Mammary epithelial cell (primary cell): ENCODE measurements at regions of chr17 and their contacts with region 1.

Region 1: GRCh38 chr17:51371732-51372151 is 111.4 kb downstream of the UTP18 start:
- DNase-seq: peak; percentile 47
- H3K4me3 ChIP-seq: no peak overlapping the region
- H3K27ac ChIP-seq: no peak overlapping the region
- H3K4me1 ChIP-seq: no peaks in the 10 kb centered on the region
- H3K27me3 ChIP-seq: no peaks in the 10 kb centered on the region
- CTCF ChIP-seq: peak; percentile 77 to 87

Region 2: DNA sequence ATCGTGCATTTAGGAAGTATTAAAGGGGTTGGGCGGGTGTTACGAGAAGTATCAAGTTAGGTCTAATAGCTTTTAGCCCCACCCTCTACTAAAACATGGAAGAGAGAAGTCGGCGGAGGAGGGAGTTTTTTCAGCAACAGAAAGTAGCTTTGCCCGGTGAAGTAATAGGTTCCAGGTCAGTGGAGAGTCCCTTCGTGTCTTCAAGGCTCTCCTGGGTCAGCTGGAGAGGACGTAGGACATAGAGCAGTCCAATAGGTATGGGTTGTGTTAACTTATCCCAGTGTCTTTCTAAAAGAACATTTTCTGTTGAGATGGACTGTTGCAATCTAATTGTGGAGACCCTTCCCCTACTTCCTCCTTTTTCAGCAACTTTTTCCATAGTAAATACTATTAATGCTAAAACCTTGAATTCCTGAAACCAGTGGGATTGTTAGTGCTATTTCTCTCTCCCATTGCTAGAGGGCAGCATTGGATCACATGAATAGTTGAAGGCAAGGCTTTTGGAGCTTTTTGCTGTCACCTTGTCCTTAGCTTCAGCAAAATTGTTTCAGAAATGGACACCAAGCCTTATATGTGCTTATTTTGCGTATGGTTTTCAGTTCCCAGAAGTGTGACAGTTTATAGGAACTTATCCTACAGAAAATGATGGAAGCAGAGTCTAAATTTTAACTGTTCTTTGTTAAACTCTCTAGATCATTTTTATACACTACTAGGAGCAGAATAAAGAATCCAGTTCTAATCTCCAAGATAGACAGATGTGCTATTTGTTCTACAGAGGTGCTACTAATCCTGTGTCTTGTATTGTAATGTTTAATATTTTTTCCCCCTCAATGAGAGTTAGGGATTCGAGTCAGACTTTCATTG is 73.0 kb before region 1 on chr17:
- CTCF ChIA-PET with region 1: no interaction called
- dilution Hi-C with region 1: no loop called
- in situ Hi-C with region 1: no loop called
- intact Hi-C with region 1: loop called (anchors 2 kb)
- DNase-seq: peak; percentile 16
- H3K4me3 ChIP-seq: no peak overlapping the region
- H3K27ac ChIP-seq: no peak overlapping the region
- H3K4me1 ChIP-seq: no peaks in the 10 kb centered on the region
- H3K27me3 ChIP-seq: no peaks in the 10 kb centered on the region
- CTCF ChIP-seq: peak; percentile 72 to 79

Region 3: DNA sequence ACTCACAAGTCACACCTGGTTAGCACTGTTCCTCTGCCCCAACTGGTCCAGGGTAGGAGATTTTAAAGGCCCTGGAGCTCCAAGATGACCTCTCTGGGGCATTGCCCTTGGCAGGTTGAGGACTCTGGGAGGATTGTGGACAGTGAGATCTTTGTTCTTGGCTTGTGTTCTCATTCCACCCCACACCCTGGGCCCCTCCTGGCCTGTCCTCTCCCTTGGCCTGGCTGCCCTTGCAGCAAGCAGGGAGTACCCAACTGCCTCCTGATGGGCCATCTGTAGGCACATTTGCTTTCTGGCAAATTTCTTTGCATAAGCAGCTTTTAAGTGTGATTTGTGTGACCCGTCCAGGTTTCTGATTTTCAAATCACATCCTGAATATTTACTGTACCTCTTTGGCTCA is 128.2 kb after region 1 on chr17:
- CTCF ChIA-PET with region 1: no interaction called
- dilution Hi-C with region 1: no loop called
- in situ Hi-C with region 1: no loop called
- intact Hi-C with region 1: no loop called
- DNase-seq: no peak
- H3K4me3 ChIP-seq: no peak overlapping the region
- H3K27ac ChIP-seq: no peak overlapping the region
- H3K4me1 ChIP-seq: no peaks in the 10 kb centered on the region
- H3K27me3 ChIP-seq: no peaks in the 10 kb centered on the region
- CTCF ChIP-seq: no peak

Region 4: DNA sequence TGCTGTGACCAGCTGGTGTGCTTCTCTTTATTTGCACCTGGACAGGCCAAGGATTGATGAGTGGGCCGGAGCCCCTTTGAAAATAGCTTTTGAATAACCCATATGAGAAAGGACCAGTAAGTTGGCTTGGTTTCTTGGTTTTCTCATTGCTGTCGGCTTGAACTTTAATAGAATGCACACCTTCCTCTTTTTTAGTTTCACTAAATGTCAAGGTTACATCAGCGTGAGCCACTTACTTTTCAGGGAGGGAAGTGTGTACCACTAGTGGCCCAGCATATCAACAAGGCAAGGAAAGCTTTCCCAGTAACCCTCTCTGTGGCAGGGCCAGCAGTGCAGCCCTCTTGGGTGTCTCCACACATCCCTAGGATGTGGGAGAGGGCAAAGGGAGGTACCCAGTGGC is 353.4 kb after region 1 on chr17:
- CTCF ChIA-PET with region 1: no interaction called
- dilution Hi-C with region 1: no loop called
- in situ Hi-C with region 1: no loop called
- intact Hi-C with region 1: no loop called
- DNase-seq: no peak
- H3K4me3 ChIP-seq: no peak overlapping the region
- H3K27ac ChIP-seq: no peak overlapping the region
- H3K4me1 ChIP-seq: no peaks in the 10 kb centered on the region
- H3K27me3 ChIP-seq: peaks cover 3% of the 10 kb centered on the region
- CTCF ChIP-seq: no peak